K562 (cell line): ENCODE measurements at regions of chr6 and their contacts with region 1.

Region 1: GRCh38 chr6:35522660-35523658 is 10.3 kb upstream of the TULP1 start:
- DNase-seq: peak; percentile 82 to 96 (median 92)
- ATAC-seq: peak; percentile 92
- H3K4me3 ChIP-seq: no peak overlapping the region
- H3K27ac ChIP-seq: no peak overlapping the region
- H3K4me1 ChIP-seq: peaks cover 0 to 3% of the 10 kb centered on the region in 2 experiments; a peak in 2 of 5 replicates
- H3K27me3 ChIP-seq: peaks cover 21 to 46% of the 10 kb centered on the region in 2 experiments
- CTCF ChIP-seq: peak; percentile 94 to 98 (median 94)
- EP300 ChIP-seq: no peak
- POLR2A ChIP-seq: no peak
- RAD21 ChIP-seq: peak; percentile 83 to 96

Region 2: GRCh38 chr6:35195120-35195780 is 327.7 kb before region 1 on chr6:
- CTCF ChIA-PET with region 1: no interaction called
- POLR2A ChIA-PET with region 1: no interaction called
- in situ Hi-C with region 1: no loop called
- intact Hi-C with region 1: no loop called
- DNase-seq: peak in 3 of 4 experiments; percentile 50 to 78 (median 53)
- ATAC-seq: peak; percentile 85
- H3K4me3 ChIP-seq: no peak overlapping the region
- H3K27ac ChIP-seq: no peak overlapping the region
- H3K4me1 ChIP-seq: peaks cover 4 to 12% of the 10 kb centered on the region in 2 experiments; a peak in 3 of 5 replicates
- H3K27me3 ChIP-seq: peaks cover 10 to 16% of the 10 kb centered on the region in 2 experiments
- CTCF ChIP-seq: peak in 2 of 3 experiments; percentile 31 to 39; a peak in 4 of 6 replicates
- EP300 ChIP-seq: no peak; the same call in 1 of the 2 replicates
- POLR2A ChIP-seq: no peak
- RAD21 ChIP-seq: peak in 1 of 2 experiments; percentile 34; a peak in 2 of 4 replicates

Region 3: GRCh38 chr6:35552285-35552917 is 29.4 kb after region 1 on chr6:
- CTCF ChIA-PET with region 1: interaction called, 3 read pairs
- POLR2A ChIA-PET with region 1: interaction called, 3 read pairs
- in situ Hi-C with region 1: no loop called
- intact Hi-C with region 1: loop called (anchors 1 kb)
- DNase-seq: peak; percentile 52 to 83 (median 78)
- ATAC-seq: peak; percentile 80
- H3K4me3 ChIP-seq: no peak overlapping the region
- H3K27ac ChIP-seq: no peak overlapping the region
- H3K4me1 ChIP-seq: no peaks in the 10 kb centered on the region; a peak in 1 of 5 replicates
- H3K27me3 ChIP-seq: peaks cover 5 to 26% of the 10 kb centered on the region in 2 experiments; a peak in 4 of 5 replicates
- CTCF ChIP-seq: peak; percentile 79 to 94 (median 81)
- EP300 ChIP-seq: no peak
- POLR2A ChIP-seq: no peak
- RAD21 ChIP-seq: peak in 1 of 2 experiments; percentile 74; a peak in 2 of 4 replicates

Region 4: GRCh38 chr6:35583893-35584688 is 61.1 kb after region 1 on chr6:
- CTCF ChIA-PET with region 1: no interaction called
- POLR2A ChIA-PET with region 1: no interaction called
- in situ Hi-C with region 1: no loop called
- intact Hi-C with region 1: loop called (anchors 5 kb)
- DNase-seq: peak; percentile 39 to 81 (median 46)
- ATAC-seq: peak; percentile 92
- H3K4me3 ChIP-seq: no peak overlapping the region
- H3K27ac ChIP-seq: no peak overlapping the region
- H3K4me1 ChIP-seq: no peaks in the 10 kb centered on the region
- H3K27me3 ChIP-seq: no peaks in the 10 kb centered on the region
- CTCF ChIP-seq: peak; percentile 83 to 93 (median 85)
- EP300 ChIP-seq: no peak
- POLR2A ChIP-seq: no peak
- RAD21 ChIP-seq: peak; percentile 97 to 98

Region 5: GRCh38 chr6:35731736-35732532 is 209.0 kb after region 1 on chr6:
- CTCF ChIA-PET with region 1: interaction called, 42 read pairs
- POLR2A ChIA-PET with region 1: interaction called, 6 read pairs
- in situ Hi-C with region 1: loop called (anchors 5 kb)
- intact Hi-C with region 1: loop called (anchors 1 kb)
- DNase-seq: peak; percentile 97 to 98 (median 98)
- ATAC-seq: peak; percentile 75
- H3K4me3 ChIP-seq: peak overlapping the region; percentile 77
- H3K27ac ChIP-seq: peak overlapping the region; percentile 85
- H3K4me1 ChIP-seq: peaks cover 46 to 63% of the 10 kb centered on the region in 2 experiments
- H3K27me3 ChIP-seq: no peaks in the 10 kb centered on the region
- CTCF ChIP-seq: peak; percentile 30 to 50 (median 42)
- EP300 ChIP-seq: peak; percentile 65; the same call in 1 of the 2 replicates
- POLR2A ChIP-seq: peak; percentile 89
- RAD21 ChIP-seq: peak; percentile 12 to 30; a peak in 1 of 4 replicates

Region 6: DNA sequence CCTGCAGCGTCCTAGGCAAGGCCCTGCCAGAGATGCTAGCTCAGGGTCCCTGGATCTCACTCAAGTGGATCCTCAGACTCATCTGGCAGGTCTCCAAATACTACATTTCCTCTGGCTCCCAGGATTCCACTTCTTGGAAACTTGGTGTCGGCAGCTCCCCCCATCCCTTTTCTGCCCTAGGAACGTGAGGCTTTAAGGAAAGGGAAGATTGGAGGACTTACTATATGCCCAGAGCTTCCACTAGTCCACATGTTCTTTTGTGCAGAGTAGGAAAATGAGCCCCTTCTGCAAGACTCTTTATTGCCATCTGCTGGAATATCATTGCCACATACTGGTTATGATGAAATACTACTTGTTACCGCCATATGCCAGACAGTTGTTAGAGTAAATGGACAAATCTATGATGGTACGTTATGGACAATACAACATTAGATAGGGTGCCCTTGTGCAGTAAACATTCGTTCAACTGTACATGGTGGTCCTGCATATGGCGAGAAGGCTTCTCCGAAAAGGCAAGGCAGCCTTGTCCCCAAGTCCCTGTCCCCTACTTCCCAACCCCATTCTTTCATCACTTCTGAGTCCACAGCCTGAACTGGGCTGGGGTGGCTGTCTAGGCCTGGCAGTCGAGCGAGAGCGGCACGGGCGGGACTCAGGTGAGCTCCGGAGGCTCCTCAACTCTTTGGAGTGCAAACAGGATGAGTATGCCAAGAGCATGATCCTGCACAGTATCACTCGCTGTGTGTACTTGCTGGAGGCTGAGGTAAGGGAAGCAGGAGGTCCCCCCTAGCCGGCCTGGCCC is 214.7 kb after region 1 on chr6:
- CTCF ChIA-PET with region 1: interaction called, 42 read pairs
- POLR2A ChIA-PET with region 1: interaction called, 6 read pairs
- in situ Hi-C with region 1: loop called (anchors 5 kb)
- intact Hi-C with region 1: loop called (anchors 1 kb)
- DNase-seq: peak; percentile 72 to 83 (median 76)
- ATAC-seq: peak; percentile 89
- H3K4me3 ChIP-seq: no peak overlapping the region
- H3K27ac ChIP-seq: no peak overlapping the region; the same call in 2 of the 3 replicates
- H3K4me1 ChIP-seq: peaks cover 12 to 14% of the 10 kb centered on the region in 2 experiments
- H3K27me3 ChIP-seq: peaks cover 0 to 1% of the 10 kb centered on the region in 2 experiments; a peak in 1 of 5 replicates
- CTCF ChIP-seq: peak; percentile 90 to 98 (median 94)
- EP300 ChIP-seq: no peak
- POLR2A ChIP-seq: no peak
- RAD21 ChIP-seq: peak; percentile 96 to 99

Region 7: DNA sequence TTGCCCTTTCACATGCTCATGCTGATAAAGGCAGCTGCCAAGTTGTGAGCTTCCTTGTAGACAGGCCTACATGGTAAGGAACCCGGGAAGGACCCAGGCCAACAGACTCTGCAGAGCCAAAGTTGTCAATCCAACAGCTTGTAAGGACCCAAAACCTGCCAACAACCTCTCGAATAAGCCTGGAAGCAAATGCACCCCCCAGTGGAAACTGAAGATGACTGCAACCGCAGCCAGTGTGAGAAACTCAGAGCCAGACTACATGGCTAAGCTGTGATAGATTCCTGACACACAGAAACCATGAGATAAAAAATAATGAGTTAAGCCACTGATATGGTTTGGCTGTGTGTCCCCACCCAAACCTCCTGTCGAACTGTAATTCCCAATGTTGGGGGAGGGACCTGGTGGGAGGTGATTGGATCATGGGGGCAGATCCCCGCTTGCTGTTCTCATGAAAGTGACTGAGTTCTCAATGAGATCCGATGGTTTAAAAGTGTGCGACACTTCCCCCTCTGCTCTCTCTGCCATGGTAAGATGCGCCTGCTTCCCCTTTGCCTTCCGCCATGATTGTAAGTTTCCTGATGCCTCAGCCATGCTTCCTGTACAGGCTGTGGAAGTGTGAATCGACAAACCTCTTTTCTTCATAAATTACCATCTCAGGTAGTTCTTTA is 234.6 kb after region 1 on chr6:
- CTCF ChIA-PET with region 1: interaction called, 5 read pairs
- POLR2A ChIA-PET with region 1: no interaction called
- in situ Hi-C with region 1: no loop called
- intact Hi-C with region 1: loop called (anchors 5 kb)
- DNase-seq: peak; percentile 57 to 81 (median 67)
- ATAC-seq: peak; percentile 96
- H3K4me3 ChIP-seq: no peak overlapping the region
- H3K27ac ChIP-seq: no peak overlapping the region
- H3K4me1 ChIP-seq: no peaks in the 10 kb centered on the region
- H3K27me3 ChIP-seq: peaks cover 41 to 79% of the 10 kb centered on the region in 2 experiments
- CTCF ChIP-seq: peak; percentile 79 to 83 (median 83)
- EP300 ChIP-seq: no peak
- POLR2A ChIP-seq: no peak
- RAD21 ChIP-seq: peak; percentile 51 to 79

Region 8: GRCh38 chr6:36094753-36095496 is 572.0 kb after region 1 on chr6:
- CTCF ChIA-PET with region 1: no interaction called
- POLR2A ChIA-PET with region 1: no interaction called
- in situ Hi-C with region 1: no loop called
- intact Hi-C with region 1: loop called (anchors 10 kb)
- DNase-seq: peak; percentile 83 to 94 (median 84)
- ATAC-seq: peak; percentile 92
- H3K4me3 ChIP-seq: no peak overlapping the region
- H3K27ac ChIP-seq: peak overlapping the region; percentile 52
- H3K4me1 ChIP-seq: peaks cover 6 to 27% of the 10 kb centered on the region in 2 experiments
- H3K27me3 ChIP-seq: no peaks in the 10 kb centered on the region
- CTCF ChIP-seq: peak; percentile 91 to 98 (median 95)
- EP300 ChIP-seq: no peak; the same call in 1 of the 2 replicates
- POLR2A ChIP-seq: no peak
- RAD21 ChIP-seq: peak; percentile 97